Right ventricle myocardium superior (tissue), 1 donor: ENCODE measurements at regions of chr2 and their contacts with region 1.

Region 1: GRCh38 chr2:55168221-55169154 is 63.6 kb downstream of the CLHC1 start:
- DNase-seq: peak; percentile 59
- ATAC-seq: peak; percentile 82

Region 2: GRCh38 chr2:54899576-54900200 is 268.8 kb before region 1 on chr2:
- intact Hi-C with region 1: loop called (anchors 5 kb)
- DNase-seq: no peak
- ATAC-seq: peak; percentile 66